A673 (cell line): ENCODE measurements at regions of chr19 and their contacts with region 1.

Region 1: GRCh38 chr19:29806098-29806866 is 5.5 kb upstream of the CCNE1 start:
- DNase-seq: peak; percentile 26
- H3K4me3 ChIP-seq: no peak overlapping the region
- H3K27ac ChIP-seq: no peak overlapping the region
- H3K4me1 ChIP-seq: no peaks in the 10 kb centered on the region
- H3K27me3 ChIP-seq: no peaks in the 10 kb centered on the region
- CTCF ChIP-seq: no peak

Region 2: DNA sequence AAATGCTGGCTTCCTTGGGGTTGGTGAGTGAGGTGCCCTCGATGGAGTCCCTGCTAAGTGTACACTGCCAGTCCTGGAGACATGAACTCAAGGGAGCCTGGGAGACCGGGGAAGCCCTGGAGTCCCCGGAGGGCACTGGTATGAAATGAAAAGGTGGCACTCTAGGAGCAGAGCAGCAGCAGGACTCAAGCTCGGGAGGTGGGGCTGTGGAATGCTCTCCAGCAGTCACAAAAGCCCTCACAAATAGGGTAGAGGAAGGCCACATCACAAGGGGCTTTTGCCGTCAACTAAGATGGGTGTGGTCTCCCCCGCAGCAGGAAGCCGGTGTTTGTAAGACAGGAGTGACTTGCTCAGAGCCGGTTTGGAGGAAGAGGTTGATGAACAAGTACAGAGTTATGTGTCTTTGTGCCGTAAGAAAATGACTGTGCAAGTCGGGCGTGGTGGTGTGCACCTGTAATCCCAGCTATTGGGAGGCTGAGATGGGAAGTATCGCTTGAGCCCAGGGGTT is 24.8 kb after region 1 on chr19:
- CTCF ChIA-PET with region 1: no interaction called
- POLR2A ChIA-PET with region 1: no interaction called
- intact Hi-C with region 1: no loop called
- DNase-seq: no peak
- H3K4me3 ChIP-seq: no peak overlapping the region
- H3K27ac ChIP-seq: no peak overlapping the region
- H3K4me1 ChIP-seq: no peaks in the 10 kb centered on the region
- H3K27me3 ChIP-seq: peaks cover 7% of the 10 kb centered on the region
- CTCF ChIP-seq: no peak

Region 3: DNA sequence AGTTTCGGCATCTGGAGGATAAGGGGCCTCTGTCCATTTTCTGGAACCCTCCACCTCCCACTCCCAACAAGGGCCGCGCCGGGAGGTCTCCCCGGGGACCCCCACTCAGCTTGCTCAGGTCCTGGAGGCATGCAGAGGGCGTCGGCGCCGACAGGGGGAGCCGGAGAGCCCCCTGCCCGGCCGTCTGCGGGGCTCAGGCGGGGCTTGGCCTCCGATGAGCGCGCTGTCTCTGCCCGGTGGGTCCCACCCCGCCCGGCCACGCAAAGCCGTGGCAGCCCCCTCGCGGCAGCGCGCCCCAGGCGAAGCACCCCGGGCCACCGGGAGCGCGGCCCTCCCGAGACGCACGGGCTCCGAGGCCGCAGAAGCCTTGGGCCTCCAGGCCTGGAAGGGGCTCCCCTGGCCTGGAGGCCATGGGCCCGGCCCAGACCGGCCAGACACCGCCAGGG is 416.2 kb after region 1 on chr19:
- CTCF ChIA-PET with region 1: no interaction called
- POLR2A ChIA-PET with region 1: no interaction called
- intact Hi-C with region 1: no loop called
- DNase-seq: peak; percentile 25
- H3K4me3 ChIP-seq: no peak overlapping the region
- H3K27ac ChIP-seq: no peak overlapping the region
- H3K4me1 ChIP-seq: peaks cover 10% of the 10 kb centered on the region
- H3K27me3 ChIP-seq: peaks cover 19% of the 10 kb centered on the region
- CTCF ChIP-seq: peak; percentile 70

Region 4: DNA sequence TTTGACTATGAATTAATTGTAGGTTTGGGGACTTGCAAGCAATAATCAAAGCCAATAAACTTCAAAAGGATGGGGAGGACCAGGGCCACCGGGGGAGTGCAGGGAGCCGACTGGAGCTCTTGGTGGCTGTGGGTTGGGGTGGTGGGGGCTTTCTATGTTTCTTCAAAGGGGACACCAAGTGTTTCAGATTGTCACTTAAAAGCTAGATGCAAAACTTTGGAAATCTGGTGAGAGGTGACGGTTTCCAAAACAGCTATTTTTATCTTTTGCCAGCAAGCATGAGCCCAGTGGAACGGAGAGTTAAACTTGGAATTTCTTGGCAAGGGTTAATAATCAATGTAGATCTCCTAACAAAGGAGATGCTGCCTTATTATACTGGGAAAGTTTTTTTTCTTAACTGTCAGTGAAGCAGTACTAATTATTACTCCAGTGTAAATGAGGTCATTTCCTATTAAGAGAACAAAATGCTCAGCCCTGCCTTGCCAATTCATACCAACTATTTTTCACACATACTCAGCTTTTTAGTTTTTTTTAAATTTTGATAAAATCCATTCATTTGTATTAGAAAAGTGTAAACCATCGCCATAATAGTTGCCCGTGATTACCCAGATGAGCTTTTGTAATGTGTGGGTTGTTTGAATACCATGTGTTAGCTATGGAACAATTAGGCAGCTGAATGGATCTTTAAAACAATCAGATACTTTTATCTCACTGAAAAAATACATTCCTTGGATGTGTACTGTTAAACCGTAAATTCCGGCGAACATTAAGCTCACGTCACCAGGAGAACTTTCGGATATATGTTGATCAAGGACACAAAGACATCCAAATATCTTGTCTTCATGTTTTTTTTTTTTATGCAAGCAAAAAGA is 470.0 kb after region 1 on chr19:
- CTCF ChIA-PET with region 1: no interaction called
- POLR2A ChIA-PET with region 1: interaction called, 14 read pairs
- intact Hi-C with region 1: no loop called
- DNase-seq: no peak
- H3K4me3 ChIP-seq: no peak overlapping the region
- H3K27ac ChIP-seq: no peak overlapping the region
- H3K4me1 ChIP-seq: no peaks in the 10 kb centered on the region
- H3K27me3 ChIP-seq: no peaks in the 10 kb centered on the region
- CTCF ChIP-seq: no peak